ENCODE measurements at regions of chr1 and their contacts with region 1.

Region 1: DNA sequence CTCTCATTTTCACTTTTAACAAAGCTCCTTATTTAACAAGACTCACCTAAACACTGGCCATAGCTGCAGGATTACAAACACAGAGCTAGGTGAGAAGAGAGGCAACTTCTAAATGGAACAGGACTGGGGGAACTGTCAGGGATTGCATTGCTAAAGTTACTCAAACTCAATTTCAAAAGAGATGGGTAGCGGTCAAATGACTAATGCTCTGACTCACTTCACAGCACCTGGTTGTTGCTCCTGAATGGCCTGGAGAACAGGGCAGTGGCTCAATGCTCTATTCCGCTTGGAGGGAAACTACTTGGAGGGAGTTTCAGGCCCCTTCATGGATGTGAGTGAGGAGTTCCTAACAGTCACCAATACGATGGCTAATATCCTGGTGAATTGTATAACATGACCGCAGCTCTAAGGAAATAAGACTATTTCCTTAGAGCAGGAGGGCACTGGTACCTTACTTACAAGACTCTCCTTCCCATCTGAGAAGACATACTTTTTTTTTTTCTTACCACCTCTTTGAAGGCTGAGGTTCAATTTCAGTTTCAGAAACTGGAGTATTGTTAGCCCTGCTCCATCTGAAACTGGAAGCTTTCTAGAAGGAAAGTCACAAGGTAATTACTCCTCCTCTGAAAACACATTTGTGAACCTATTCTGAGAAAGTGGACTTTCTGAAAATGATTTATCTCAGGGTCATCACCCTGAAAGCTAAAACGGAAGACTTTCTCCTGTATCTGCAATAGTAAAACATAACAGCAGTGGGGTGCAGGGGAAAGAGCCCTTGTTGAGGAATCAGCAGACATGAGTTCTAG is 9.5 kb downstream of the DPT start:
- DNase-seq: peak in 1 of 2 donors; percentile 50
- ATAC-seq: peak; percentile 93 to 97
- H3K4me3 ChIP-seq: no peak overlapping the region
- H3K27ac ChIP-seq: peak overlapping the region; percentile 43 to 69 (median 58)
- H3K4me1 ChIP-seq: peaks cover 14 to 18% of the 10 kb centered on the region in 2 donors
- H3K27me3 ChIP-seq: no peaks in the 10 kb centered on the region
- CTCF ChIP-seq: no peak
- POLR2A ChIP-seq: peak in 1 of 2 donors; percentile 30

Region 2: GRCh38 chr1:168783458-168784230 is 64.1 kb after region 1 on chr1:
- in situ Hi-C with region 1: no loop called
- intact Hi-C with region 1: loop called (anchors 5 kb)
- DNase-seq: peak; percentile 13 to 14
- ATAC-seq: peak; percentile 89 to 94
- H3K4me3 ChIP-seq: no peak overlapping the region
- H3K27ac ChIP-seq: peak overlapping the region; percentile 10 to 46 (median 26)
- H3K4me1 ChIP-seq: peaks cover 8 to 13% of the 10 kb centered on the region in 2 donors
- H3K27me3 ChIP-seq: no peaks in the 10 kb centered on the region
- CTCF ChIP-seq: no peak
- POLR2A ChIP-seq: no peak

Region 3: DNA sequence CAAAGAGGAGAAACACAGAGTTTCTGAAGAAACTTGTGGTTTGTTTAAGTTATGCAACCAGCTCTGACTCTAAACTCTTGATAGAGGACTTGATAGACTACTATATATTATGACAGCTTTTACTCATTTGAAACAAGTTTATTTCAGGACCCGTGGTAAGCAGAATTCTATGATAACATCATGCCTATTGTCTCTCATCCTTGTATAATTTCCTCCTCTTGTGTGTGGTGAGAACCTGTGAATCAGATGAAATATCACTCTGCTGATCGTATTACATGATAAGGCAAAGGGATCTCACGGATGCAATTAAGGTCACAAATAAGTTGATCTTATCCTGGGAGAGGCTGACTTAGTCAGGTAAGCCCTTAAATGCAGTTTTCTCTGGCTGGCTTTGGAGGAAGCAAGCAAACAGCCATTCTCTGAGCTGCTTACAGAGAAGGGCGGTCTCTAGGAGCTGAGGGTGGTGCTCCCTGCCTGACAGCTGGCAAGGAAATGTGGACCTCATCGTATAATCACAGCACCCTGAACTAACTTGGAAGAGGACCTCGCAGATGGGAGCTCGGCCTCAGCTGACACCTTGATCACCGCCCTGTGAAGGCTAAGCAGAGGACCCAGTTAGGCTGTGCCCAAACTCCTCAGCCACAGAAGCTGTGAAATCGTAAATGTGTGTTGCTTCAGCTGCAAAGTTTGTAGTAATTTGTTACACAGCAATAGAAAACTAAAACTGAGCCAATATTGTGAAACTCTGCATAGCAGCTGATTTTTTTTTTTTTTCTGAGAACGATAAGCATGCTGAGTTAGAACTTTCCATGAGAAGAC is 160.6 kb after region 1 on chr1:
- in situ Hi-C with region 1: no loop called
- intact Hi-C with region 1: loop called (anchors 10 kb)
- DNase-seq: peak; percentile 25 to 38
- ATAC-seq: peak; percentile 80 to 83
- H3K4me3 ChIP-seq: peak overlapping the region in 1 of 4 donors; percentile 20
- H3K27ac ChIP-seq: peak overlapping the region; percentile 22 to 46 (median 44)
- H3K4me1 ChIP-seq: peaks cover 10 to 15% of the 10 kb centered on the region in 2 donors
- H3K27me3 ChIP-seq: no peaks in the 10 kb centered on the region
- CTCF ChIP-seq: no peak
- POLR2A ChIP-seq: no peak